ENCODE measurements at regions of chr18 and their contacts with region 1.

Region 1: DNA sequence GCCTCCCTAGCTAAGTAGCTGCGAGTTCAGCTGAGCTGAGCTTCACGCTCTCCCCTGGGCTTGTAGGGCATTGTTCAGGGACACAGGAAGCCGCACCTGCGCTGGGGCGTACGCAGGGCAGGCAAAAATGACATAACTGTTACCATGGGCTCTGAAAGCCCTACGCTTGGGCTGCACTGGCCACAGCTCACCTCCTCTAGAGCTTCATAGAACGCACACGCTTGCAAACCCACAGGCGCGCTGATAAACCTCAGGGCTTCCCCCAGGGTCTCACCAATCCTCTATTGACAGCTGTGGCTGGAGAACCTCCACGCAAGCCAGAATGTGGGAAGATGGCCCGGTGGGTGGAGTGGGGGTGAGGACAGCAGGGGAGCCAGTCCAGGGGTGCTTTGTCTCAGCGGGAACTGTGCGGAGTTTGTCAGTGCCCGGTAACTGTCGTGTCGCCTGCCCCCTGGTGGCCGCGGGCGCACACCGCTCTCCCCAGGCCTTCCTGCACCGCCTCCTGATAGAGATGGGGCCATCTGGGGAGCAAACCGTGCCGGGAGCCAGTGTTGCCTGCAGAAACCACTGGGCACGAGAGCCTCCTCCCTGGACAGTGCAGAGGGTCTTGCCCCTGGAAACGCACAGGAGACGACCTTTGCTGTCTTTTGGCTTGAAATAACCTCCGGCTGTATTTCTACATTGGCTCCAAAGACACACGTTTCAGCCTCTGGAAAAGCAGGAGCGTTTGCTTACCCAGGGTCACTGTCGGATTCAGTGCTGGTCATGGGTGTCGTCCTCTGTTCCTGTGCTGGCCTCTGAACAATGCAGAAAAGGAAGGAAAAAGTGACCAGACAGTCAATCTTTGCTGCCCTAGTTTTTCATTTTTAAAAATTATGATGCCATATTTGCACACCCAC is 17.0 kb upstream of the CIDEA start:
- DNase-seq: peak; percentile 71
- H3K27ac ChIP-seq: no peak overlapping the region
- CTCF ChIP-seq: peak; percentile 88

Region 2: DNA sequence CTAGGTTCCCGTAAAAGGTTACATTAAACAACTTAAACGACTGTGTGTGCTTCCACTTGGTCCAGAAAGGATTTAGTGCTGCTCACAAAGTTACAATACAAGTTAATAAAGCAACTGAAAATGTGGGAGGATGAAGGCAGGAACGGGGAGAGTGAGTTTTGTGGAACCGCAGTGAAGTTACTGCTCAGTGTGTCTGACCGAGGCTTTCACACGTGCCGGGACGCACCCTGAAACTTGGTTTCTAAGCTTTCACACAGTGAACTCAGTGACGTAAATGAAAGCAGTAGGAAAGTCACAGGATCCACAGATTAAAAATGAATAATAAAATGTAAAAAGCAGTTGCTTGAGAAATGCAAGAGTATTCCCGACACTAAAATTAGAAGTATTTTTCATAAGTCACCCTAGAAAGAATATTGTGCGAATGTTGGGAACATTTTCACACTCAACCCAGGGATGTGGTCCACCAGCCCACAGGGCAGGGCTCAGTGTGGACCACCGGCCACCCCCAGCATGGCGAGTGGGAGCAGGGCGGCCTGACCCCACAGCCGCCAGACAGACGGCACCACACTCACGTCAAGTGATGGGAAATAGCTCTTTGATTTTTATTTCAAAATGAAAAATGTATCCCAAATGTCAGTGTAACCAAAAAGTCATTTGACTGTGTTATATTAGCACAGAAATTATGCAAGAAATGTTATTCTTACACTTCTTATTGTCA is 418.5 kb before region 1 on chr18:
- CTCF ChIA-PET with region 1: no interaction called
- POLR2A ChIA-PET with region 1: no interaction called
- DNase-seq: no peak
- H3K27ac ChIP-seq: no peak overlapping the region
- CTCF ChIP-seq: no peak

Region 3: DNA sequence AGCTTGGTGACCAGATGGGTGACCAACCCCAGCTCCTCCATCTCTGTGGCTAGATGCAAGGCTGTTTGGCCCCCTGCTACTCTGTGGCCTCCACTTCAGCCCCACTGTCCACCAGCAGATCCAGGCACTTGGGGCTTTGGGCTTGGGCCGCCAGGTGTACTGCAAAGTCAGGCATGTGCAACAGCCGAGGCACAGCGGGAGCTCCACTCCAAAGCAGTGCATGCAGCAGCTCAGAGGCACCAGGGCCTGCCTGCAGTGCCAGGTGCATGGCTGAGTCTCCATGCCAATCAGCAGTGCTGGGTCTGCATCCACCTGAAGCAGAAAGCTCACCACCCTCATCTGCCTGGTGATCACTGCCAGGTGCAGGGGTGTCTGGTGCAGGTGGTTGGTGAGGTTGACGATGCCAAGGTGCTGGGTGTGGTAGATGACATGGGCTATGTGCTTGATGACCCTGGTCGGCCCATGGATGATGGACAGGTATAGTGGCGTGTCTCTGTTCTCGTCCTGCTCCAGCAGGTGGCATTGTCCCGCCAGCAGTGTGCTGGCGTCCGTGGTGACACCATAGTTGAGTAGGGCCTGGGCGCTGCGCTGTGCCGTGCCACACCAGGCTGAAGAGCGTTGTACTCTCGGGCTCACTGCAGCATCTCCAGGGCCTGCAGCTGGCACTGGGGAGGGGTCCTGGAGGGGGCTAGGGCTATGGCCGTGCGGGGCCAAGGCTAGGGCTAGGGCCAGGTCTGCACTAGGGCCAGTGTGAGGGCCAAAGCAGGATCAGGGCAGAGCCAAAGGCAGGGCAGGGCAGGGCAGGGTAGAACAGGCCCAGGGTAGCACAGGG is 144.6 kb before region 1 on chr18:
- CTCF ChIA-PET with region 1: interaction called, 10 read pairs
- POLR2A ChIA-PET with region 1: no interaction called
- DNase-seq: peak; percentile 20
- H3K27ac ChIP-seq: no peak overlapping the region
- CTCF ChIP-seq: no peak; the same call in 1 of the 2 replicates

Region 4: DNA sequence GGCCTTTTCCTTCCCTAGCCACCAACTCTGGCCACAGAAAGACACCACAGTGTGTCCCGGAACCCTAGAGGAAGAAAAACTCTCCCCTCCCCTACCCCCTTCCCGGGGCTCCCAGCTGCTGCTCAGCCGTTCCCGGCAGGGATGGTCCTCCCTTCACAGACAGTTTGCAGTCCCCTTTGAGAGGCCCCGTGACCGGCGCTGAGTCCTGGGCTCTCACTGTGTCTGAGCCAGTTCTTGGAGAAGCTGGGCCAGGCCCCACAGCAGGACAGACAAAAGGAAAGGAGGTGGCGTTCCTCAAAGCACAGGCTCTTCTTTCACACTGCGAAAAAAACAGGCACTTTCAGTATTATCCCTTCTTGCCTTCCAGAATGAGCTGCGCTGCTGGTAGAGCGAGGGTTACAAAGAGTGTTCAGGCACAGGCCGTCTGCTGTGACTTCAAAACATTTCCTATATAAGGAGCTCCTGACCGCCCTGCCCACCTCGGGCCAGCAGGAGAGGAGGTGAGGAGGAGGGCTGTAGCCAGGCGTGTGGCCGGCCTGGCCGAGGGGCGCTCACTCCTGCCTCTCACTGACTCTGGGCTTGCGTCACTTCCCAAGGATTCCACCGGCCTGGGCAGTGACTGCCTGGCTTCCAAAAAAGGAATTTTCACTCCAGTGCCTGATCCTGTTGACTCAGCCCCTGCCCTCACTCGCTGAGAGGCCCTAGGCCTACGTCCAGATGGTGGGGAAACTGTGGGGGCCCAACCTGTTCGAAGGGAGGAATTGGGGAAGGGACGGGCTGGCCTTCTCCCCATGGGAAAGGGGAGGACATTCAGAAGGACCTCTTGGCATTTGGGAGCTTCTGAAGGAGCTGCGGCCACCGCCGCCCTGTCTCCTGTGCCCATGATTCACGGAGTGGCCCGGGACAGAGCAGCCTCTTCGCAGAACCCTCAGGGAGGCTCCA is 41.8 kb after region 1 on chr18:
- CTCF ChIA-PET with region 1: no interaction called
- POLR2A ChIA-PET with region 1: no interaction called
- DNase-seq: peak; percentile 46
- H3K27ac ChIP-seq: peak overlapping the region; percentile 65
- CTCF ChIP-seq: no peak

Region 5: DNA sequence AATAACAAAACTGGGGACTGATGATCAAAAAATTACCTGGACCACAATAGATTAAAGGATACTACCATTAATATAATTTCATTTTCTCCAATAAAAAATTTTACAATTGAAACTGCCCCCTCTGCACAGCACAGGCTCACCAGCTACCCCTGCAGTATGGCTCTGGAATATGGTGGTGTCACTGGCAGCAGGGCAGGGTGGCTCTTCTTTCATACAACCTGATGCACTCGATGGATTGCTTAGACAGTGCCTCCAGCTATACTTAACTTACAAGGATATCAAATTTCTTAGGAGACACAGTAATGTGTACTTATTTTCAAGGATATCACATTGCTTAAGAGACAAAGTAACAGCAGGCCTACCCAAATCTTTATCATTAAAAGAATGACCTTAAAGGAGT is 294.6 kb after region 1 on chr18:
- CTCF ChIA-PET with region 1: no interaction called
- POLR2A ChIA-PET with region 1: no interaction called
- DNase-seq: no peak
- H3K27ac ChIP-seq: no peak overlapping the region
- CTCF ChIP-seq: no peak

Measured in RWPE1 (cell line).